Activated T-helper 1 cell treated with anti-CD3 and anti-CD28 coated beads, Interleukin-12 subunit alpha, Interleukin-12 subunit beta, Interleukin-2, Interleukin-4 antibody, amounts not matched to agents 30 ng/mL and 10 ng/mL and 1 ng/mL, durations not matched to agents 14 hours and 24 hours and 36 hours (primary cell): ENCODE measurements at regions of chr1 and their contacts with region 1.

Region 1: GRCh38 chr1:23118957-23119792 is 49.5 kb downstream of the LUZP1 start:
- DNase-seq: peak; percentile 44
- H3K4me3 Mint-ChIP-seq: peak overlapping the region; percentile 9
- H3K27ac Mint-ChIP-seq: peak overlapping the region; percentile 67
- H3K4me1 Mint-ChIP-seq: peaks cover 70% of the 10 kb centered on the region
- H3K27me3 Mint-ChIP-seq: no peaks in the 10 kb centered on the region

Region 2: GRCh38 chr1:23148084-23148483 is 28.9 kb after region 1 on chr1:
- intact Hi-C with region 1: loop called (anchors 1 kb)
- DNase-seq: no peak
- H3K4me3 Mint-ChIP-seq: peak overlapping the region; percentile 38
- H3K27ac Mint-ChIP-seq: peak overlapping the region; percentile 81
- H3K4me1 Mint-ChIP-seq: peaks cover 30% of the 10 kb centered on the region
- H3K27me3 Mint-ChIP-seq: no peaks in the 10 kb centered on the region

Region 3: GRCh38 chr1:23530747-23531561 is 411.8 kb after region 1 on chr1 and contains the start of gene E2F2:
- intact Hi-C with region 1: loop called (anchors 10 kb)
- DNase-seq: peak; percentile 76
- H3K4me3 Mint-ChIP-seq: peak within 1 kb of the TSS; percentile 96
- H3K27ac Mint-ChIP-seq: peak within 1 kb of the TSS; percentile 97
- H3K4me1 Mint-ChIP-seq: peaks cover 84% of the 10 kb centered on the region
- H3K27me3 Mint-ChIP-seq: no peaks in the 10 kb centered on the region
- total RNA-seq, gene E2F2: 32.0 and 33.5 TPM in 2 replicates

Region 4: GRCh38 chr1:23611608-23612327 is 492.6 kb after region 1 on chr1:
- intact Hi-C with region 1: no loop called
- DNase-seq: no peak
- H3K4me3 Mint-ChIP-seq: no peak overlapping the region
- H3K27ac Mint-ChIP-seq: peak overlapping the region; percentile 90
- H3K4me1 Mint-ChIP-seq: peaks cover 57% of the 10 kb centered on the region
- H3K27me3 Mint-ChIP-seq: peaks cover 2% of the 10 kb centered on the region